Activated CD4-positive, alpha-beta T cell treated with anti-CD3 and anti-CD28 coated beads for 36 hours (primary cell): ENCODE measurements at regions of chr1 and their contacts with region 1.

Region 1: DNA sequence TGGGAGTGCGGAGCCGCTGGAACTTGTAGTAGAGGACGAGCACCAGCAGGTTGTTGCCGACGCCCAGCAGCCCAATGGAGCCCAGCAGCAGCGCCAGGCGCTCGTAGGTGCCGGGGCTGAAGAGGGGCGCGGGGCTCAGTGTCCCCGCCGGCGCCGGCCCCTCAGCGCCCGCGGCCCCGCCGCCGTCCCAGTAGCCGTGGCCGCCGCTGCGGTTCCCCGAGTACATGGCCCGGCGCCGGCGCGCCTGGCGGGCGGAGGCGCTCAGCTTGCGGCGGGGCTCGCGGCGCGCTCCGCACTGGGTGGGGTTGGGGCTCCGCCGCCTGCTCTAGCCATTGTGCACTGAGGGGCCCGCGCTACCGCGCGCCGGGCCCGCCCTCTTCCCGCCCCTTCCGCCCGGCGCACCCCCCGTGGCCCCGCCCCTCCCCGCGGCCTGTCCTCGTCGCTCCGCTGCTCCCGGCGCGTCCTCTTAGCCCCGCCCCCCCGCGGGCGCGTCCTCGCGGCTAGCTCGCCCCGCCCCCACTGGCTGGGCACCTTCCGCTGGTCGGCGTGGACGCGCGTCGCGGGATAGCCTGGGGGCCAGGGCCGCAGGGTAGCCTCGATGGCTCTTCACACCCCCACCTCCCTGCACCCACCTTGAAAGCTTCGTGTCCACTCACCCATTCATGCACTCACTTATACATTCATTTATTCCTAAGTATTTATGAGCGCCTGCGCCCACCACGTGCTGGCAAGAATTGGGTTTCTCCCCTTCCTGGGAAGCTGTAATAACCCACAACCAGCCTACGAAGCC is at the starts of genes CHML and OPN3:
- DNase-seq: peak; percentile 96
- ATAC-seq: peak; percentile 97
- H3K4me3 Mint-ChIP-seq: peak within 1 kb of the TSS; percentile 77
- H3K27ac Mint-ChIP-seq: peak within 1 kb of the TSS; percentile 83
- H3K4me1 Mint-ChIP-seq: peaks cover 43% of the 10 kb centered on the region
- H3K27me3 Mint-ChIP-seq: no peaks in the 10 kb centered on the region
- total RNA-seq, gene CHML: 13.4 to 16.5 TPM
- total RNA-seq, gene OPN3: 10.8 to 12.2 TPM

Region 2: GRCh38 chr1:241519308-241520079 is 120.7 kb before region 1 on chr1 and contains the start of gene FH:
- CTCF ChIA-PET with region 1: no interaction called
- POLR2A ChIA-PET with region 1: interaction called, 16 read pairs
- intact Hi-C with region 1: loop called (anchors 1 kb)
- DNase-seq: peak; percentile 96
- ATAC-seq: peak; percentile 98
- H3K4me3 Mint-ChIP-seq: peak within 1 kb of the TSS; percentile 86
- H3K27ac Mint-ChIP-seq: peak within 1 kb of the TSS; percentile 87
- H3K4me1 Mint-ChIP-seq: peaks cover 21% of the 10 kb centered on the region
- H3K27me3 Mint-ChIP-seq: peaks cover 23% of the 10 kb centered on the region
- total RNA-seq, gene FH: 80.2 to 94.3 TPM

Region 3: DNA sequence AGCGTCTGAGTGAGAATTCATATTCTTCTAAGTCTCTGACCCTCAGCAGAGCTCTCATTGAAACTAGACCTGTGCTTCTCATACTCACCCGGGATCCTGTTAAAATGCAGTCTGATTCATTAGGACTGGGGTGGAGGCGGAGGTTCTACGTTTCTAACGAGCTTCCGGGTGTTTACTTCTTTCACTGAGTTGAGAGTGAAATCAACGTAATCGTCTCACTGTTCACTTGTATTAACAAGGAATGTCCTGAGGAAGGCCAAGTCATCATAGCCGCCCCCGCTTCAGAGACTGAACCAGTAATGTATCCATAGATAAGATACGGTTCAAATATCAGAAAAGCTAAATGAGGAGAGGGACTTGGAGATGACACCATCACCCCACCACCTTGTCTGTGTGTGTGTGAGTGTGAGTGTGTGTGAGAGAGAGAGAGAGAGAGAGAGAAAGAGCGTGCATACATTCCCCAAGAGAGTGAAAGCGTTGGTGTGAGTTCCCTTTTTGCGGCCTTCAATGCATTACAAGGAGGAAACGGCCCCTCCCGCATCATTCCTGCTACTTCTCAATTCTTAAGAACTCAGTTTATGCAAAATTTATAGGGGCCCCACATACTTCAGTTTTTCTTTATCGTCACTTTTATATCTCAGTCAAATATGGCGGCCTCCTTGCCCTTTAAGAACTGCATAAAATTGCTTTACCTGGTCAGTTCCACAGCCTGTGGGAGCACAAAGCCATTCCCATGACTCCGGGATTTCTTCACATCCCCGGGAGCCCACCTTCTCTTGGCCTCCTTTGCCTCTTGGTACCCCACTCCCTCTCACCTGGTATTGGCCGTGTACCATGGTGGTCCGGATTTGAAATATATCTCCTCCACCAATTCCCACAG is 88.2 kb before region 1 on chr1:
- CTCF ChIA-PET with region 1: no interaction called
- POLR2A ChIA-PET with region 1: interaction called, 3 read pairs
- intact Hi-C with region 1: loop called in 1 of 2 experiments (anchors 1 kb)
- DNase-seq: peak; percentile 75
- ATAC-seq: peak; percentile 97
- H3K4me3 Mint-ChIP-seq: peak overlapping the region; percentile 71
- H3K27ac Mint-ChIP-seq: peak overlapping the region; percentile 98
- H3K4me1 Mint-ChIP-seq: peaks cover 30% of the 10 kb centered on the region
- H3K27me3 Mint-ChIP-seq: no peaks in the 10 kb centered on the region

Region 4: DNA sequence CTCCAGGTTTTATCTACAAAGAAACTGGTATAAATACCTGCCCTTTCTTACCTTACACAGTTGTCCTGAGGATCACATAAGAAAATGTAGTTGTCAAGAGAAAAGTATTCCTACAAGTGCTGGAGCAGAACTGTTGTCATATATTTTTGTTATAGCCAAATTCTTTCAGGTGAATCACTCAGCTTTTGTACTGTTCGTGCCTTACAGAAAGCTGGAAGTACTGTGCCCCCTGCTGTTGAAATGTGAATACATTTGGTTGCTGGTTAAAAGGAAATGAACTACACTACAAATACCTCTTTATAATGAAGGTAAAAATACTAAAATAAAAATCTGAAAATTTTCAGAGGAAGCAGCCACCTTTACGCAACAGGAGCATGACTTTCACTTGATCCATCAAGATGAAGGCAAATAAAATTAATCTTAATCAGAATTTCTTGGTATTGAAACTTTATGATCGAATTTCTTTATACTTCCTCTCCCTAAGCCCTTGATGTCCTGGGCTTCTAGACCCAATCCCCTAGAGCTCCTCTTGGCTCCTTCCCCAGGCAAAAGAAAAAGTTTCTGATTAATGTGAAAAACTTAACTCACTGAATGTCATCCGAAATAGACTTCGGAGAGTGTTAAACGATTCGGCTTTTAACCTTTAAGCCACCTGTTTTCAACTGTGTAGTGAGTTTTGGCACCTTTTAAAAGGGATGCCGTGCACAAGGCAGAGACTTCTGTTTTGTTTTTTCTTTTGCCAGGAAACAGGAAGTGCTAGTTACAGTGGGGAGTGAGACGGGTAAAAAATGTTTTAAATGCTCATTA is 12.6 kb before region 1 on chr1:
- CTCF ChIA-PET with region 1: interaction called, 12 read pairs
- POLR2A ChIA-PET with region 1: no interaction called
- intact Hi-C with region 1: no loop called
- DNase-seq: peak; percentile 58
- ATAC-seq: peak; percentile 89
- H3K4me3 Mint-ChIP-seq: peak overlapping the region; percentile 1
- H3K27ac Mint-ChIP-seq: peak overlapping the region; percentile 44
- H3K4me1 Mint-ChIP-seq: peaks cover 22% of the 10 kb centered on the region
- H3K27me3 Mint-ChIP-seq: no peaks in the 10 kb centered on the region

Region 5: DNA sequence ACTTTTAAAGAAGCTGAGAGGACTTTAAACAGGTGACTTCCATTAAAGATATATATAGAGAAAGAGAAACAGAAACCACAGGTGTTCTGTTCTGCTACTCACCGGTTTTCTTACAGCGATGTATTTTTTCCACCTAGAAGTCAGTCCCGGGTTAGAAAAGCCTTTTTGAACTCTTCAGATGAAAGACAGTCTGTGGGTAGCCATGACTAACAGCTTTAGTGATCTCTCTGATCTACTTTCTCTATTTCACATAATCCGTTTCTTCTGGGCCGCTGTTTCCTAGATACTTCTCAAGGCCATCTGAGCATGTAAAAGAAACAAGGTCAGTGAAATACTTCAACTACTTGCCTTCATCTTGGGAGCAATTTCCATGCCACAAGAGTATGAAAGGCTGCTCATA is 37.0 kb after region 1 on chr1:
- CTCF ChIA-PET with region 1: no interaction called
- POLR2A ChIA-PET with region 1: interaction called, 7 read pairs
- intact Hi-C with region 1: loop called (anchors 1 kb)
- DNase-seq: peak; percentile 28
- ATAC-seq: peak; percentile 97
- H3K4me3 Mint-ChIP-seq: peak overlapping the region; percentile 28
- H3K27ac Mint-ChIP-seq: peak overlapping the region; percentile 35
- H3K4me1 Mint-ChIP-seq: peaks cover 27% of the 10 kb centered on the region
- H3K27me3 Mint-ChIP-seq: peaks cover 6% of the 10 kb centered on the region

Region 6: DNA sequence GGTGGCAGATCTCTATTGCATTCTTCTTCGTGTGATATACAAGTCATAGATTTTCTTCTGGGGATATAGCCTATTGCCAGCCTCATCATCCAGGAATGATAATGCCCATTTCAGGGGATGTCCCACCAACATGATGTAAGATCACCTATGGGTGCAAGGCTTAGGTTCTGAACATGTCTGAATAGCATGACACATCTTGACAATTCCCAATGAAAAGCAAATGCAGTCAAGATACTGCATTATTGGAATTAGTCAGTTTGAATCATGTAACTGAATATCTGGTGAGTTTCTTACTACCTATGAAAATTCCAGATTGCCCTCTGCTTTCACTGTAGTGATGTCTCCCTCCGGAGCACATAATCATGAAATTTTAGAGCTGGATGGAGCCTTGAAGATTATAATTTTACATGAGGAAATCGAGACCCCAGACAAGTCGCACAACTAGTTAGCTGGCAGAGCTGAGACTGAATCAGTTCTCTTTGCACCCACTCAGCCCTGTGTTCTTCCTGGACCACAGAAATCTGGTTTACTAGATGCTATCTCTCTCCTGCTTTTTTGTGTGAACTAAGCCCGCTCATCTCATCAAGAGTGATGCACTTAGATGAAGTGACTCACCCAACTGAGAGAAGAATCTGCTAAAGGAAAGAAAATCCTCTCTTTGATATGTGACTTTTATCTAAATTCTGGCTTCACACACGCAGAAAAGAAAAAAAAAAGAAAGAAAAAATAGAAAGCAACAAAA is 76.9 kb after region 1 on chr1:
- CTCF ChIA-PET with region 1: no interaction called
- POLR2A ChIA-PET with region 1: no interaction called
- intact Hi-C with region 1: loop called in 1 of 2 experiments (anchors 5 kb)
- DNase-seq: peak; percentile 46
- ATAC-seq: peak; percentile 94
- H3K4me3 Mint-ChIP-seq: no peak overlapping the region
- H3K27ac Mint-ChIP-seq: no peak overlapping the region
- H3K4me1 Mint-ChIP-seq: peaks cover 19% of the 10 kb centered on the region
- H3K27me3 Mint-ChIP-seq: peaks cover 11% of the 10 kb centered on the region

Region 7: DNA sequence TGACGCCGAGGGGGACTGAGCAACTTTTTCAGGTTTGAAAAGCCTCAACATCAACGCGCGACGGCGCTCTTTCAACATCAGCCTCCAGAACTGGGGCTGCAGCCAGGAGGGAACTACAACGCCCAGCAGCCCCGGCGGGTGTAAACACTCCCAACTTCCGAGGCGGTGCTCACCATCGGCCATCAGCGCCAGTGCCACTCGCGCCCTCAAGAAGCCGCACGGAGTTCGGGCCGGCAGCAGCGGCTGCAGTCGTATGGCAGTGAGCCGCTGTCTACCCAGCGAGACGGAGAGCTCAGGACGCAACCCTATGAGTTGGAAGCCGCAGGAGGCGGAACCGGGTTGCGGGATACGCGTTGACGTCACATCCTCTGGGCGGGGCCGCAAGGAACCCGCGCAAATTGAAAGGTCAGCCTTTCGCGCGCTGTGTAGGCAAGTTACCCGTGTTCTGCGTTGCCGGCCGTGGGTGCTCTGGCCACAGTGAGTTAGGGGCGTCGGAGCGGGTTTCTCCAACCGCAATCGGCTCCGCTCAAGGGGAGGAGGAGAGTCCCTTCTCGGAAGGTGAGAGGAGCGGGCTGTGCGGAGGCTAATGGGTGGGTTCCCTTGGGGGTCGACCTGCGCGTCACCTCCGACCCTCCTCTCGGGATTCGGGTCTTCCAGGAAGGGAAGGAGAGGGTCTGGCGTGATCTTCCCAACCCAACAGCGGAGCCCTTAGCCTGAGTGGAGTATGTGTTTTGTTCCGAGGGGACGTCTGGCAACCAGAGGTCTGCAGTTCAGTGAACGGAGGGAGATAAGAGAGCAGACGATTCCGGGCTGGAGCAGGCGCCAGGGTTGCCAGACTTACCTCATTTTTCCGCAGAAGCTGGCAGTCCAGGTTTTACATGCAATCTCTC is 207.8 kb after region 1 on chr1 and contains the start of gene EXO1:
- CTCF ChIA-PET with region 1: interaction called, 3 read pairs
- POLR2A ChIA-PET with region 1: interaction called, 6 read pairs
- intact Hi-C with region 1: loop called (anchors 1 kb)
- DNase-seq: peak; percentile 95
- ATAC-seq: peak; percentile 97
- H3K4me3 Mint-ChIP-seq: peak within 1 kb of the TSS; percentile 99
- H3K27ac Mint-ChIP-seq: peak within 1 kb of the TSS; percentile 99
- H3K4me1 Mint-ChIP-seq: peaks cover 14% of the 10 kb centered on the region
- H3K27me3 Mint-ChIP-seq: no peaks in the 10 kb centered on the region
- total RNA-seq, gene EXO1: 53.8 to 57.8 TPM